Activated CD8-positive, alpha-beta T cell treated with anti-CD3 and anti-CD28 coated beads for 36 hours (primary cell): ENCODE measurements at regions of chr7 and their contacts with region 1.

Region 1: GRCh38 chr7:128398016-128398840 is 11.6 kb downstream of the IMPDH1 start:
- DNase-seq: peak; percentile 58
- ATAC-seq: peak; percentile 72
- H3K4me3 Mint-ChIP-seq: no peak overlapping the region
- H3K27ac Mint-ChIP-seq: no peak overlapping the region
- H3K4me1 Mint-ChIP-seq: no peaks in the 10 kb centered on the region
- H3K27me3 Mint-ChIP-seq: no peaks in the 10 kb centered on the region
- CTCF ChIP-seq: peak; percentile 96

Region 2: DNA sequence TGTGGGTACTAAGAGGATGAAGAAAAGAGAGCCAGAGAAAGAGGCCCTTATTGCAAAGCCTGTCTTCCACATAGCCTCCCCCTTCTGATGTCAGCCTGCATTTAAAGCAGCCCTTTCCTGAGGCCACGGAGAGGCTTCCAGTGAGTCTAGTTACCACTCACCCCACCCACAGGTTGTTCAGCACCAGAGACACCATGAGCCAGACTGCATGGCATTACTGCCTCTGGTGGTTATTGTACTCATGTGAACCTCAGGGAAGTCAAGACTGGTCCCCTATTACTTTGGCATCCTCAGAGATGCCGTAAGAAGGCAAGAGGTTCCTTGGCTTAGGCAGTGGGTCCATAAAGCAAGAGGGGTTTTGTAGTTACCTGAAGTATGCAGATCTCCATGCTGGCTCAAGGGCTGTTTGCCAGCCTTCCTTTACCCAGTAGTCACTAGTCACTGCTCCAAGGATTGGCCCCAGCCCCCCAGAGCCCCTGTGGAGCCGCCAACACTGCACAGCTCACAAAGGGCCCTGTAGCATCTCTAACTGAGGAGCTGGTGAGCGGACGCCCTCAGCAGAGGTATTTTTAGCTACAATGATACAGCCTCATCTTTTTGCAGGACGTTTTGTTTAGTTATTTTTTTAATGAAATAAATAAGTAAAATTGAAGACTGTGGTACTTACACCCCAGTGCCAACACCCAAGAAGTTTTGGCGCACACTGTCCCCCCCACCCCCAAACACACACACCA is 387.7 kb before region 1 on chr7:
- CTCF ChIA-PET with region 1: no interaction called
- POLR2A ChIA-PET with region 1: no interaction called
- intact Hi-C with region 1: no loop called
- DNase-seq: peak; percentile 9
- ATAC-seq: peak; percentile 42
- H3K4me3 Mint-ChIP-seq: no peak overlapping the region
- H3K27ac Mint-ChIP-seq: no peak overlapping the region
- H3K4me1 Mint-ChIP-seq: no peaks in the 10 kb centered on the region
- H3K27me3 Mint-ChIP-seq: no peaks in the 10 kb centered on the region
- CTCF ChIP-seq: no peak

Region 3: GRCh38 chr7:128247676-128248194 is 150.5 kb before region 1 on chr7:
- CTCF ChIA-PET with region 1: no interaction called
- POLR2A ChIA-PET with region 1: no interaction called
- intact Hi-C with region 1: no loop called
- DNase-seq: no peak
- ATAC-seq: no peak
- H3K4me3 Mint-ChIP-seq: no peak overlapping the region
- H3K27ac Mint-ChIP-seq: no peak overlapping the region
- H3K4me1 Mint-ChIP-seq: no peaks in the 10 kb centered on the region
- H3K27me3 Mint-ChIP-seq: no peaks in the 10 kb centered on the region
- CTCF ChIP-seq: no peak

Region 4: GRCh38 chr7:128409596-128410160 is 11.4 kb after region 1 on chr7 and contains the start of gene IMPDH1:
- CTCF ChIA-PET with region 1: interaction called, 11 read pairs
- POLR2A ChIA-PET with region 1: interaction called, 7 read pairs
- intact Hi-C with region 1: no loop called
- DNase-seq: peak; percentile 85
- ATAC-seq: peak; percentile 84
- H3K4me3 Mint-ChIP-seq: peak within 1 kb of the TSS; percentile 76
- H3K27ac Mint-ChIP-seq: peak within 1 kb of the TSS; percentile 59
- H3K4me1 Mint-ChIP-seq: peaks cover 18% of the 10 kb centered on the region
- H3K27me3 Mint-ChIP-seq: peaks cover 10% of the 10 kb centered on the region
- CTCF ChIP-seq: no peak
- total RNA-seq, gene IMPDH1: 60.5 to 68.1 TPM

Region 5: GRCh38 chr7:128415217-128415785 is 17.1 kb after region 1 on chr7:
- CTCF ChIA-PET with region 1: interaction called, 18 read pairs
- POLR2A ChIA-PET with region 1: interaction called, 3 read pairs
- intact Hi-C with region 1: no loop called
- DNase-seq: no peak
- ATAC-seq: no peak
- H3K4me3 Mint-ChIP-seq: no peak overlapping the region
- H3K27ac Mint-ChIP-seq: no peak overlapping the region
- H3K4me1 Mint-ChIP-seq: peaks cover 2% of the 10 kb centered on the region
- H3K27me3 Mint-ChIP-seq: peaks cover 10% of the 10 kb centered on the region
- CTCF ChIP-seq: no peak